Activated CD8-positive, alpha-beta T cell treated with anti-CD3 and anti-CD28 coated beads, Interleukin-2, amount 10 ng/mL, durations not matched to agents 7 days and 5 days (primary cell): ENCODE measurements at regions of chr11 and their contacts with region 1.

Region 1: GRCh38 chr11:35305670-35306382 is 113.5 kb downstream of the SLC1A2 start:
- DNase-seq: peak; percentile 68
- ATAC-seq: peak; percentile 84
- H3K4me3 Mint-ChIP-seq: peak overlapping the region; percentile 44
- H3K27ac Mint-ChIP-seq: peak overlapping the region; percentile 83
- H3K4me1 Mint-ChIP-seq: peaks cover 19% of the 10 kb centered on the region
- H3K27me3 Mint-ChIP-seq: no peaks in the 10 kb centered on the region

Region 2: GRCh38 chr11:34926101-34926830 is 379.6 kb before region 1 on chr11:
- CTCF ChIA-PET with region 1: interaction called, 68 read pairs
- POLR2A ChIA-PET with region 1: no interaction called
- DNase-seq: peak; percentile 41
- ATAC-seq: peak; percentile 55
- H3K4me3 Mint-ChIP-seq: no peak overlapping the region
- H3K27ac Mint-ChIP-seq: no peak overlapping the region
- H3K4me1 Mint-ChIP-seq: peaks cover 10% of the 10 kb centered on the region
- H3K27me3 Mint-ChIP-seq: no peaks in the 10 kb centered on the region

Region 3: GRCh38 chr11:35100013-35100383 is 205.8 kb before region 1 on chr11:
- CTCF ChIA-PET with region 1: no interaction called
- POLR2A ChIA-PET with region 1: no interaction called
- DNase-seq: no peak
- ATAC-seq: no peak
- H3K4me3 Mint-ChIP-seq: no peak overlapping the region
- H3K27ac Mint-ChIP-seq: no peak overlapping the region
- H3K4me1 Mint-ChIP-seq: peaks cover 15% of the 10 kb centered on the region
- H3K27me3 Mint-ChIP-seq: no peaks in the 10 kb centered on the region

Region 4: GRCh38 chr11:35237860-35238715 is 67.7 kb before region 1 on chr11:
- CTCF ChIA-PET with region 1: interaction called, 14 read pairs
- POLR2A ChIA-PET with region 1: no interaction called
- DNase-seq: peak; percentile 73
- ATAC-seq: no peak
- H3K4me3 Mint-ChIP-seq: no peak overlapping the region
- H3K27ac Mint-ChIP-seq: no peak overlapping the region
- H3K4me1 Mint-ChIP-seq: peaks cover 87% of the 10 kb centered on the region
- H3K27me3 Mint-ChIP-seq: peaks cover 2% of the 10 kb centered on the region

Region 5: DNA sequence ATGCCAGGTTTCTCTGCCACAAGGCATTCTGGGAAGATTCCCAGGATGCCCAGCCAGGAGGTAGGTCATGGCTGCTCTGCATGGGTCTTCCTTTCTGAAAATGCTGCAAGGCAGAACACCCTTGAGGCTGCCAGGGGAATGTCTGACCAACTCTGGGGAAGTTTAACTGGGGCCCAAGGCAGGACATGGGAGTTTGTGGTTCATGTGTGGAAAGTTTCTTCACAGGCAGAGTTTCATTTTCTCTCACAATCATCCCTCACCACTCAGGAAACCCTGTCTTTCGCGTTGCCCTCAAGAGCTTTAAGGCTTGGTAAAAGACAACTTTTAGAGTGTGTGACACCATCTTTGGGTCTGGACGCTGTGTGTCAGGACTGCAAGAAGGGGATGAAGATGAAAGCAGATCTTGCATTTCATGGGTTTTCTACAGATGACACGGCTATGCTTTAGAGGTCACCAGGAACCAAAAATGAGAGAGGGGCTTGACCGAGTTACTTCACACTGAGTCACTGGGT is 33.4 kb before region 1 on chr11:
- CTCF ChIA-PET with region 1: interaction called, 12 read pairs
- POLR2A ChIA-PET with region 1: no interaction called
- DNase-seq: peak; percentile 71
- ATAC-seq: peak; percentile 93
- H3K4me3 Mint-ChIP-seq: peak overlapping the region; percentile 52
- H3K27ac Mint-ChIP-seq: peak overlapping the region; percentile 89
- H3K4me1 Mint-ChIP-seq: peaks cover 62% of the 10 kb centered on the region
- H3K27me3 Mint-ChIP-seq: no peaks in the 10 kb centered on the region

Region 6: GRCh38 chr11:35318977-35319925 is 13.4 kb after region 1 on chr11:
- CTCF ChIA-PET with region 1: interaction called, 26 read pairs
- POLR2A ChIA-PET with region 1: interaction called, 3 read pairs
- DNase-seq: no peak
- ATAC-seq: no peak
- H3K4me3 Mint-ChIP-seq: no peak overlapping the region
- H3K27ac Mint-ChIP-seq: no peak overlapping the region
- H3K4me1 Mint-ChIP-seq: peaks cover 22% of the 10 kb centered on the region
- H3K27me3 Mint-ChIP-seq: no peaks in the 10 kb centered on the region

Region 7: GRCh38 chr11:35391922-35392813 is 86.3 kb after region 1 on chr11:
- CTCF ChIA-PET with region 1: interaction called, 19 read pairs
- POLR2A ChIA-PET with region 1: no interaction called
- DNase-seq: peak; percentile 84
- ATAC-seq: peak; percentile 80
- H3K4me3 Mint-ChIP-seq: no peak overlapping the region
- H3K27ac Mint-ChIP-seq: no peak overlapping the region
- H3K4me1 Mint-ChIP-seq: peaks cover 15% of the 10 kb centered on the region
- H3K27me3 Mint-ChIP-seq: peaks cover 4% of the 10 kb centered on the region